B cell (primary cell): ENCODE measurements at regions of chr2 and their contacts with region 1.

Region 1: GRCh38 chr2:62038975-62039771 is 133.7 kb downstream of the COMMD1 start:
- DNase-seq: peak; percentile 69
- ATAC-seq: peak; percentile 97
- H3K4me3 ChIP-seq: no peak overlapping the region
- H3K4me3 Mint-ChIP-seq: peak overlapping the region; percentile 27
- H3K27ac ChIP-seq: peak overlapping the region in 1 of 2 donors; percentile 18
- H3K27ac Mint-ChIP-seq: peak overlapping the region; percentile 70
- H3K4me1 ChIP-seq: peaks cover 20 to 22% of the 10 kb centered on the region in 2 donors
- H3K4me1 Mint-ChIP-seq: peaks cover 17% of the 10 kb centered on the region
- H3K27me3 ChIP-seq: no peaks in the 10 kb centered on the region
- H3K27me3 Mint-ChIP-seq: no peaks in the 10 kb centered on the region
- CTCF ChIP-seq: no peak

Region 2: GRCh38 chr2:62074233-62074632 is 35.1 kb after region 1 on chr2:
- CTCF ChIA-PET with region 1: no interaction called
- POLR2A ChIA-PET with region 1: no interaction called
- intact Hi-C with region 1: no loop called
- DNase-seq: no peak
- ATAC-seq: no peak
- H3K4me3 ChIP-seq: no peak overlapping the region
- H3K4me3 Mint-ChIP-seq: no peak overlapping the region
- H3K27ac ChIP-seq: no peak overlapping the region
- H3K27ac Mint-ChIP-seq: no peak overlapping the region
- H3K4me1 ChIP-seq: no peaks in the 10 kb centered on the region
- H3K4me1 Mint-ChIP-seq: no peaks in the 10 kb centered on the region
- H3K27me3 ChIP-seq: no peaks in the 10 kb centered on the region
- H3K27me3 Mint-ChIP-seq: no peaks in the 10 kb centered on the region
- CTCF ChIP-seq: no peak

Region 3: GRCh38 chr2:62149708-62150107 is 110.5 kb after region 1 on chr2:
- CTCF ChIA-PET with region 1: no interaction called
- POLR2A ChIA-PET with region 1: interaction called, 3 read pairs
- intact Hi-C with region 1: loop called (anchors 10 kb)
- DNase-seq: no peak
- ATAC-seq: no peak
- H3K4me3 ChIP-seq: no peak overlapping the region
- H3K4me3 Mint-ChIP-seq: no peak overlapping the region
- H3K27ac ChIP-seq: no peak overlapping the region
- H3K27ac Mint-ChIP-seq: no peak overlapping the region
- H3K4me1 ChIP-seq: peaks cover 16 to 25% of the 10 kb centered on the region in 2 donors
- H3K4me1 Mint-ChIP-seq: peaks cover 28% of the 10 kb centered on the region
- H3K27me3 ChIP-seq: no peaks in the 10 kb centered on the region
- H3K27me3 Mint-ChIP-seq: no peaks in the 10 kb centered on the region
- CTCF ChIP-seq: no peak

Region 4: GRCh38 chr2:62475172-62476011 is 436.2 kb after region 1 on chr2:
- CTCF ChIA-PET with region 1: no interaction called
- POLR2A ChIA-PET with region 1: no interaction called
- intact Hi-C with region 1: no loop called
- DNase-seq: no peak
- ATAC-seq: no peak
- H3K4me3 ChIP-seq: peak overlapping the region in 1 of 5 experiments; percentile 18
- H3K4me3 Mint-ChIP-seq: peak overlapping the region; percentile 42
- H3K27ac ChIP-seq: no peak overlapping the region
- H3K27ac Mint-ChIP-seq: no peak overlapping the region
- H3K4me1 ChIP-seq: peaks cover 10 to 14% of the 10 kb centered on the region in 2 donors
- H3K4me1 Mint-ChIP-seq: peaks cover 16% of the 10 kb centered on the region
- H3K27me3 ChIP-seq: peaks cover 0 to 10% (median 2%) of the 10 kb centered on the region in 4 experiments
- H3K27me3 Mint-ChIP-seq: peaks cover 24% of the 10 kb centered on the region
- CTCF ChIP-seq: no peak